Heart left ventricle (tissue), 16 donors: ENCODE measurements at regions of chr12 and their contacts with region 1.

Region 1: DNA sequence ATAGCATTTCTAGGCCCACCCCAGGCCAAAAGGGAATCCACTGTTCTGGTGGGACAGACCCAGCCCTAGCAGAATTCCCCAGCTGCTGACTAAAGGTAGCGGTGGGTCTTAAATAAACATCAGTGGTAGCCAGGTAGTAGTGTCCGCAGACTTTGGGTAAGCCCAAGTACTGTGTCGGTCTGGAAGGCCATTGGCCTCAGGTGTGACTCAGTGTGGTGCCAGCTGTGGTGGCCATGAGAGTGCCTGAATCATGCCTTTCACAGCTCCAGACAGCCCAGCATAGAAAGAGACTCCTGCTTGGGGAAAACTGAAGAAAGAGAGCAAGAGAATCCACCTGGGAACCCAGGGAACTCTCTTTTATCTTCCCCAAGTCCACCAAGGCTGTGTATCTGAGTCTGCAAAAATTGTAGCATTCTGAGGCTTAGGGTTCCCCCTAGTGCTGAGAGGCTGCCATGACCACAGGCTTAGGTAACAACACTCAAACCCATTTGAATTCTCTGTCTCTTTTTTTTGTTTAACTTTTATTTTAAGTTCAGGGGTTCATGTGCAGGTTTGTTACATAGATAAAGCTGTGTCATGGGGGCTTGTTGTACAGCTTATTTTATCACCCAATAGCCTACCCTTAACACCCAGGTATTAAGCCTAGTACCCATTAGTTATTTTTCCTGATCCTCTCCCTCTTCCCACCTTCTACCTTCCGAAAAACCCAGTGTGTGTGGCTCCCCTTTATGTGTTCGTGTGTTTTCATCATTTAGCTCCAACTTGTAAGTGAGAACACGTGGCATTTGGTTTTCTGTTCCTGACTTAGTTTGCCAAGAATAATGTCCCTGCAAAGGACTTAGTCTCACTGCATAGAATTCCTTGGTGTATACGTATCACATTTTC is 16.7 kb upstream of the CD163L1 start:
- DNase-seq: peak in 1 of 5 donors; percentile 28
- ATAC-seq: peak; percentile 58 to 84 (median 74)
- H3K4me3 ChIP-seq: no peak overlapping the region
- H3K27ac ChIP-seq: no peak overlapping the region
- H3K4me1 ChIP-seq: no peaks in the 10 kb centered on the region
- H3K27me3 ChIP-seq: no peaks in the 10 kb centered on the region
- CTCF ChIP-seq: peak; percentile 33 to 84 (median 71)
- POLR2A ChIP-seq: no peak

Region 2: GRCh38 chr12:7219599-7220243 is 240.9 kb before region 1 on chr12:
- intact Hi-C with region 1: loop called (anchors 2 to 5 kb)
- DNase-seq: peak in 4 of 5 donors; percentile 59 to 69 (median 64)
- ATAC-seq: peak in 3 of 4 donors; percentile 41 to 72 (median 58)
- H3K4me3 ChIP-seq: no peak overlapping the region
- H3K27ac ChIP-seq: no peak overlapping the region
- H3K4me1 ChIP-seq: no peaks in the 10 kb centered on the region
- H3K27me3 ChIP-seq: no peaks in the 10 kb centered on the region
- CTCF ChIP-seq: peak; percentile 68 to 94 (median 86)
- POLR2A ChIP-seq: no peak

Region 3: DNA sequence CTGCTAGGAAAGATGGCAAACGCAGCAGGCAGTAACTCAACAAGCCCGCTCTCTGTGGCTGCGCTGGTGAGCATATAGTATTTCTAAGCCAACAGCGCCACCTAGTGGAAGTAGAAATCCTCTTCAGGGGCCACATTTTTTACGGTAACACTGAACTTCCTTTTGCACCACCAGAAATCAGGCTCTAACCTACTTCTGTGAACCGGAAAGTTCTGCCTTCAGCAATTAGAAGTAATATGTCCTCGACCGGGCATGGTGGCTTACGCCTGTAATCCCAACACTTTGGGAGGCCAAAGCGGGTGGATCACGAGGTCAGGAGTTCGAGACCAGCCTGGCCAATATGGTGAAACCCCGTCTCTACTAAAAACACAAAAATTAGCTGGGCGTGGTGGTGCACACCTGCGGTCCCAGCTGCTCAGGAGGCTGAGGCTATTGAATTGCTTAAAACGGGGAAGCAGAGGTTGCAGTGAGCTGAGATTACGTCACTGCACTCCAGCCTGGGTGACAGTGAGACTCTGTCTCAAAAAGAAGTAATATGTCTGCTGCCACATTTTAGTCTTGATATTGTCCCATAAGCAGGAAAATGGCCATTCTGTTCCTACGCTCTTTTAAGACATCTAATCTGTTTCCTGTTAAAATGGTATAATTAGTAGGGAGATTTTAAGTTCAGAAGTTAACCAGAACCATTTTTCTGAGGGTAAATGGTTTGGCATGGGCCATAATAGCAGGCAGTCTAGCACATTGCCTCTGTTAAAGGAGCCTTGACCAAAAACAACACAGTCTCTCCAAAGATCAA is 178.3 kb after region 1 on chr12:
- intact Hi-C with region 1: loop called in 2 of 10 experiments (anchors 10 kb)
- DNase-seq: peak; percentile 70 to 74 (median 72)
- ATAC-seq: peak; percentile 93 to 97 (median 96)
- H3K4me3 ChIP-seq: peak overlapping the region in 6 of 12 donors; percentile 20 to 55 (median 50)
- H3K27ac ChIP-seq: peak overlapping the region in 1 of 12 donors; percentile 69
- H3K4me1 ChIP-seq: peaks cover 0 to 14% (median 0%) of the 10 kb centered on the region in 12 donors
- H3K27me3 ChIP-seq: peaks cover 0 to 33% (median 4%) of the 10 kb centered on the region in 9 donors
- CTCF ChIP-seq: peak; percentile 80 to 96 (median 86)
- POLR2A ChIP-seq: no peak

Region 4: DNA sequence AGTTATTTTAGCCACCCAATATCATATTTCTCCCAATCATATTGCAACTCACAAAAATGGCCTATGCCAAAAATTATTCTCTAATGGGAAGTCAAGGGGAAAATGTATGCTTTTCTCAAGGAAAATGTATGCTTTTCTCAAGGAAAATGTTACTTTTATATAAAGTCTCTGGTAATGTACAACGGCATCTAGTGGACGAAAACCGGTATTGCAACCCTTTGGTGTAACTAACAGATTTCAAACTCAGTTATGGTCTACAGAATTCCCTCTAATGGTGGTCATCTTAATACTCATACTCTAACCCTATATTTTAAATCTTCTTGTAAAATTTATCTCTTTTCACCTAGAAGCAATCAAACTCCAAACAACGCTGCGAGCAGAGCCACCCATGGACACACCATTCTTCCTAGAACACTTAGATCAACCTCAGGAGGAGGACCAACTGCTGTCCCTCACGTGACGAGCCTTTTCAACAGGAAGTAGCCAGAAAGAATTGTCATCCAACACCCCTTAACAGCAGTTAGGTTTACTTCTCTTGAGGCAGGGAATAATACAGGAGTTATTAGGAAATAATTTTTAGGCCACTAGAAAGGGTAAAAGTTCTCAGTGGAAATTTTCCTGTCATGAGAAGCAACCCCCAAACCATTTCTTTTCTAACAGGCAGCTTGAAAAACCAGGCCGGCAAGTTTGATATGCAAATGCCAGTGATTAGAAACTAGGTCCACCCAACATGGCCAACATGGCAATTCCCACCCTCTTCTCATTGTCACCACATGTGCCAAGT is 185.0 kb after region 1 on chr12:
- intact Hi-C with region 1: loop called in 1 of 10 experiments (anchors 10 kb)
- DNase-seq: no peak
- ATAC-seq: no peak
- H3K4me3 ChIP-seq: no peak overlapping the region
- H3K27ac ChIP-seq: no peak overlapping the region
- H3K4me1 ChIP-seq: peaks cover 0 to 5% (median 0%) of the 10 kb centered on the region in 12 donors
- H3K27me3 ChIP-seq: peaks cover 0 to 5% (median 0%) of the 10 kb centered on the region in 9 donors
- CTCF ChIP-seq: peak; percentile 71 to 89 (median 82)
- POLR2A ChIP-seq: no peak

Region 5: DNA sequence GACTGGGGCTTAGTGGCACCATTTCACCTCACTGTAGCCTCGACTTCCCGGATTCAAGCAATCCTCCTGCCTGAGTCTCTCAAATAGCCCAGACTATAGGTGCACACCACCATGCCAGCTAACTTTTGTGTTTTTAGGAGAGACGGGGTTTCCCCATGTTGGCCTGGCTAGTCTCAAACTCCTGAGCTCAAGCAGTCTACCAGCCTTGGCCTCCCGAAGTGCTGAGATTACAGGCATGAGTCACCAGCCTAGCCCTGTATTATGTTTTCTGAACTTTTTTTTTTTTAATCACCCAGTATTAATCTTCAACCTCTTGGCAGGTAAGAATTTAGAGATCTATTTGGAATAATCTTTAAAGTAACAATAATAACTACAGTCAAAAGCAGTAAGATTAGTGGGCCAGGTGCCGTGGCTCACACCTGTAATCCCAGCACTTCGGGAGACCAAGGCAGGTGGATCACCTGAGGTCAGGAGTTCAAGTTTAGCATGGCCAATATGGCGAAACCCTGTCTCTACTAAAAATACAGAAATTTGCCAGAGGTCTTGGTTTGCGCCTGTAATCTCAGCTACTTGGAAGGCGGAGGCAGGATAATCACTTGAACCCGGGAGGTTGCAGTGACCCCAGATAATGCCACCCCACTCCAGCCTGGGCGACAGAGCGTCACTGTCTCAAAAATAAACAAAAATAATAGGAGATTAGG is 337.2 kb after region 1 on chr12:
- intact Hi-C with region 1: no loop called
- DNase-seq: no peak
- ATAC-seq: no peak
- H3K4me3 ChIP-seq: no peak overlapping the region
- H3K27ac ChIP-seq: no peak overlapping the region
- H3K4me1 ChIP-seq: no peaks in the 10 kb centered on the region
- H3K27me3 ChIP-seq: no peaks in the 10 kb centered on the region
- CTCF ChIP-seq: no peak
- POLR2A ChIP-seq: no peak